Mammary epithelial cell (primary cell): ENCODE measurements at regions of chr11 and their contacts with region 1.

Region 1: GRCh38 chr11:8126649-8127289 is 42.1 kb downstream of the RIC3 start:
- DNase-seq: no peak
- H3K4me3 ChIP-seq: no peak overlapping the region
- H3K27ac ChIP-seq: no peak overlapping the region
- H3K4me1 ChIP-seq: no peaks in the 10 kb centered on the region
- H3K27me3 ChIP-seq: no peaks in the 10 kb centered on the region
- CTCF ChIP-seq: no peak

Region 2: GRCh38 chr11:7536100-7536499 is 590.7 kb before region 1 on chr11:
- CTCF ChIA-PET with region 1: interaction called, 16 read pairs
- dilution Hi-C with region 1: no loop called
- in situ Hi-C with region 1: no loop called
- intact Hi-C with region 1: no loop called
- DNase-seq: no peak
- H3K4me3 ChIP-seq: no peak overlapping the region
- H3K27ac ChIP-seq: no peak overlapping the region
- H3K4me1 ChIP-seq: no peaks in the 10 kb centered on the region
- H3K27me3 ChIP-seq: no peaks in the 10 kb centered on the region
- CTCF ChIP-seq: no peak